Activated T-helper 2 cell treated with anti-CD3 and anti-CD28 coated beads, Interferon-gamma antibody, Interleukin-2, Interleukin-4, amounts not matched to agents 10 μg/mL and 5 μg/mL and 100 μg/mL, durations not matched to agents 14 hours and 24 hours and 36 hours (primary cell): ENCODE measurements at regions of chr6 and their contacts with region 1.

Region 1: GRCh38 chr6:31729979-31730630 is 1.0 kb upstream of the DDAH2 start:
- DNase-seq: peak; percentile 56
- H3K4me3 Mint-ChIP-seq: peak overlapping the region; percentile 85
- H3K27ac Mint-ChIP-seq: peak overlapping the region; percentile 6
- H3K4me1 Mint-ChIP-seq: peaks cover 58% of the 10 kb centered on the region
- H3K27me3 Mint-ChIP-seq: no peaks in the 10 kb centered on the region

Region 2: DNA sequence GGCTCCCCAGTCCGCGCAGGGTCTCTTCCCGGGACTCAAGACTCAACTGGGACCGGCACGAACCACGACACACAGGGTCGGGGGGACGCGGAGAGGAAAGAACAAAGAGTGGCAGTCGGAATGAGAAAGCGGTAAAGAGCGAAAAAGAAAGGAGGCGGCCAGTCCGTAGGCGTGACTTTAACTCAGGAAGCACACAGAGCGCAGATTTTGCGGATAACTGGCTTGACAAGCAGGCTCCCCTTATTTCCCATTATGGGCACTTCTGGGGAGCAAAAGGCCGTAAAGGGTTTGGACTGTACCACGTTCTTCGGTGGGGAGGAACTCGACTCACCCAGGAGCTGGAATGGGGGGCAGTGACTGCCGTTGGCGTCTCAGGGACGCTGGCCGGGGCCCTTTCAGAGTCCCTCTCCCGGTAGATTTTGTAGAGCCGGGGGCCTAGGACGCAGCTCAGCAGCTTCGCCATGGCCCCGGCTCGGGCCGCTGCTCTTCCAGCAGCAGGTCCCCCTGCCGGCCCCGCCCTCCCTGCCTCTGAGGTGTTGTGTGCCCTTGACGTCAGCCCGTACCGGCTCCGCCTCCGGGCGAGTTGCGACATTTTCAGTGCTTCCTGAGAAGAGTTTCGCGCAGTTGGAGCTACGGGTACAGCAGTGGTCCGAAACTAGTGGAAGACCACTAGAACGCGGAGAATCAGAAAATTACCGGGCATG is 27.1 kb before region 1 on chr6 and contains the start of gene ABHD16A:
- intact Hi-C with region 1: loop called (anchors 1 kb)
- DNase-seq: peak; percentile 96
- H3K4me3 Mint-ChIP-seq: peak within 1 kb of the TSS; percentile 99
- H3K27ac Mint-ChIP-seq: peak within 1 kb of the TSS; percentile 98
- H3K4me1 Mint-ChIP-seq: peaks cover 21% of the 10 kb centered on the region
- H3K27me3 Mint-ChIP-seq: no peaks in the 10 kb centered on the region
- total RNA-seq, gene ABHD16A: 51.4 and 52.7 TPM in 2 replicates

Region 3: GRCh38 chr6:31769684-31770371 is 39.7 kb after region 1 on chr6:
- intact Hi-C with region 1: loop called (anchors 2 kb)
- DNase-seq: peak; percentile 77
- H3K4me3 Mint-ChIP-seq: no peak overlapping the region
- H3K27ac Mint-ChIP-seq: no peak overlapping the region
- H3K4me1 Mint-ChIP-seq: peaks cover 15% of the 10 kb centered on the region
- H3K27me3 Mint-ChIP-seq: no peaks in the 10 kb centered on the region